Activated CD4-positive, alpha-beta T cell treated with anti-CD3 and anti-CD28 coated beads, Interleukin-2, amount 10 ng/mL, durations not matched to agents 7 days and 5 days (primary cell): ENCODE measurements at regions of chr19 and their contacts with region 1.

Region 1: DNA sequence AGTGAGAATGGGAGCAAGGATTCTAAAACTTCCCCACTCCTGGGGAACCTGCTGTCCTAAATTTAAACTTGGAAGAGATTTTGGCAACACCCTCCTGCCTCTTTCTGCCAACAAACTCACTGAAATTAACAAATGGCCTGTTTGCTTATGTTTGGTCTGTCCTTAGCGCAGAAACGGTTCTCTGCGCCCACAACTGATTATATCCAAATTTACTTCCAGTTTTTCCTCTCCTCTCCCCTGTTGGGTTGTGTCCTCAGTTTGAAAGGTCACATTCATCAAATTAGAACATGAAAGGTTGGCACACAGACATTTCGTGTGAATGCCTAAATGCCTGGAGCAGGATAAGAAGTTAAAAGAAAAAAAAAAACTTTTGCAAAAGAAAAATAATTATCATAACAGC is 56.4 kb upstream of the MRI1 start:
- DNase-seq: no peak
- H3K4me3 Mint-ChIP-seq: no peak overlapping the region
- H3K27ac Mint-ChIP-seq: no peak overlapping the region
- H3K4me1 Mint-ChIP-seq: no peaks in the 10 kb centered on the region
- H3K27me3 Mint-ChIP-seq: no peaks in the 10 kb centered on the region

Region 2: DNA sequence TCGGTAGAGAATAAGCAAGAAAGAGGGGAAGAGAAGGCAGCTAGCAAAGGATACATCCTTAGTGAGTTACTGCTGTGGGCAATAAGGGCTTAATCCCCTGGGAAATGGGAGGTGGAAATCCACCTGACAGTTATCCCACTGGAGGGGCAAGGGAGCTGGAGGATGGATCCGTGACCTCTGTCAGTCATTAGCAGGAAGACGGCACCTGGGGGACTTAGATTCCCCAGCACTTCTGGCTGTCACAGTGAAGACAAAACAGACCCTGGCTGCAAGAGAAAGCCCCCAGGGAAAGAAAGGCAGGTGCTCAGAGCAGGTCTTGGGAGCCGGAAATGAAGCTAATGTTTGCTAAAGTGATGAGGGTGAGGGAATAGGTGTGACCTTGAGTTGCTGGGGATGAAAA is 14.0 kb before region 1 on chr19:
- CTCF ChIA-PET with region 1: interaction called, 3 read pairs
- POLR2A ChIA-PET with region 1: interaction called, 10 read pairs
- DNase-seq: no peak
- H3K4me3 Mint-ChIP-seq: no peak overlapping the region
- H3K27ac Mint-ChIP-seq: no peak overlapping the region
- H3K4me1 Mint-ChIP-seq: no peaks in the 10 kb centered on the region
- H3K27me3 Mint-ChIP-seq: peaks cover 3% of the 10 kb centered on the region